ENCODE measurements at regions of chr11 and their contacts with region 1.

Region 1: DNA sequence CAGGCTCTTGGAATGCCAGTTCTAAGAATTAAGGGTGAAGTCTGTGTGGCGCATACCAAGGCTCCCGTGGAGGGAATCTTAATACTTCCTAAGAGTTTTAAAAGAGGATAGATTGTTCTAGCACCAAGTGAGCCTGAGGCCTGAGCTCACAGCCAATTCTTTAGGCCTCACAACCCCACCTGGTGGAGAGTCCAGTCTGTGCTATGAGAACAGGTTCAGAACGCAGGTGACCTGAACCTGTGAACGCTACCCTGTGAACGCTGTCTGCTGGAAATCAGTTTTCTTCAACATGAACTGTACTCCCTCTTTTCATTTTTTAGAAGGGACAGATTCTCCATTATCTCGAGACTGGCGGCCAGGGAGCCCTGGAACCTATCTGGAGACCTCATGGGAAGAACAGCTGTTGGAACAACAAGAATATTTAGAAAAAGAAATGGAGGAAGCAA is 43.2 kb upstream of the DLAT start:
- DNase-seq: peak; percentile 31
- ATAC-seq: peak; percentile 98
- H3K4me3 ChIP-seq: no peak overlapping the region
- H3K27ac ChIP-seq: no peak overlapping the region
- H3K4me1 ChIP-seq: no peaks in the 10 kb centered on the region
- H3K27me3 ChIP-seq: no peaks in the 10 kb centered on the region
- CTCF ChIP-seq: peak; percentile 66 to 82 (median 80)
- POLR2A ChIP-seq: no peak
- RAD21 ChIP-seq: peak; percentile 83

Region 2: DNA sequence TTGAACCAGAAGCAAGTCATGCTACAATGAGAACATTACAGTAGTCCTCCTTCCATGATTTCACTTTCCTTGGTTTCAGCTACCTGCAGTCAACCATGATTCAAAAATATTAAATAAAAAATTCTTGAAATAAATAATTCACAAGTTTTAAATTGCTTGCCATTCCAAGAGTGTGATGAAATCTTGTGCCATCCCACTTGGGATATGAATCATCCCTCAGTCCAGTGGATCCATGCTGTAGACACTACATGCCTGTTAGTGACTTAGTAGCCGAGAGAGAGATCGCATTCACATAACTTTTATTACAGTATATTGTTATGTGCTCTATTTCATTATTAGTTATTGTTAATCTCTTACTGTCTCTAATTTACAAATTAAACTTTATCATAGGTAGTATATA is 461.5 kb before region 1 on chr11:
- CTCF ChIA-PET with region 1: no interaction called
- POLR2A ChIA-PET with region 1: no interaction called
- RAD21 ChIA-PET with region 1: no interaction called
- intact Hi-C with region 1: no loop called
- DNase-seq: no peak
- ATAC-seq: no peak
- H3K4me3 ChIP-seq: no peak overlapping the region
- H3K27ac ChIP-seq: no peak overlapping the region
- H3K4me1 ChIP-seq: 0 out of 4 replicates have a peak, but pooled peaks cover 0 to 4% of the 10 kb centered on the region in 2 experiments
- H3K27me3 ChIP-seq: no peaks in the 10 kb centered on the region
- CTCF ChIP-seq: no peak
- POLR2A ChIP-seq: no peak
- RAD21 ChIP-seq: no peak

Region 3: DNA sequence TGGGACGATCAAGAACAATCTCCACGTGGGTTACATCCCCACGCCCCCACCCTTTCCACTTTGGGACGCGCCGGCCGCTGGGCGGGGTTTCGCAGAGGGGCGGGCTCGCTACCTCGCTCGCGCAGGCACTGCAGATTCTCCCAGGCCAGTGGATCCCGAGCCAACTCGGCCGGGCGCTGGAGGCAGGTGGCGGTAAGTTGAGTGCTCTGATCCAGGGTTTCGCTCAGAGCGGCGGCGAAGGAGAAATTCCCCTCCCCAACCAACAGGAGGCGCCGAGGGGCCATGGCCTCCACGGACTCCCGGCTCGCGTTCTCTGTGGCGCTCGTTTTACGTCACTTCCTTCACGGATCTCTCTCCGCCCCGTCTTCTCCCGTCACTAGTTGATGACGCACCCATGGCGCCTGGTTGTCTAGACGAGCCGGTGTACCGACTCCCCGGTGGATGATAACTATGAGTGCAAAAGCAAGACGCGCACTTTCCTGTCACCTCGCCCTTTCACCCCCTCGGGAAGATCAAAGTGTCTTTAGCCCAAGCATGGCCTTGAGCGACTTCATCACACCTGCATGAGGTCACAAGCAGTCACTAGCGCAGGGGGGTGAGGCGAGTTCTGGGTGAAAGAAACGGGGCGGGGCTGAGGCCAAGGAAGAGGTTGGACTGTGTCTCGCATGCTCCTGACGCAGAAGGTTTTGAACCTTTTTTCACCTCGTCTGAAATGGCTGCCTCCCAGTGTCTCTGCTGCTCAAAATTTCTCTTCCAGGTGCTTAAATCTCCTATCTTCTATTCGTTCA is 103.0 kb before region 1 on chr11 and contains the starts of genes CFAP68 and FDXACB1:
- CTCF ChIA-PET with region 1: interaction called, 4 read pairs
- POLR2A ChIA-PET with region 1: no interaction called
- RAD21 ChIA-PET with region 1: no interaction called
- intact Hi-C with region 1: loop called (anchors 1 kb)
- DNase-seq: peak; percentile 98
- ATAC-seq: peak; percentile 85
- H3K4me3 ChIP-seq: peak within 1 kb of the TSS; percentile 83 to 91
- H3K27ac ChIP-seq: peak within 1 kb of the TSS; percentile 65
- H3K4me1 ChIP-seq: peaks cover 3 to 15% of the 10 kb centered on the region in 2 experiments; a peak in 3 of 4 replicates
- H3K27me3 ChIP-seq: no peaks in the 10 kb centered on the region
- CTCF ChIP-seq: peak; percentile 78 to 91 (median 87)
- POLR2A ChIP-seq: peak; percentile 74
- RAD21 ChIP-seq: peak; percentile 91
- total RNA-seq, gene CFAP68: 49.6 TPM
- total RNA-seq, gene FDXACB1: 3.8 TPM

Region 4: DNA sequence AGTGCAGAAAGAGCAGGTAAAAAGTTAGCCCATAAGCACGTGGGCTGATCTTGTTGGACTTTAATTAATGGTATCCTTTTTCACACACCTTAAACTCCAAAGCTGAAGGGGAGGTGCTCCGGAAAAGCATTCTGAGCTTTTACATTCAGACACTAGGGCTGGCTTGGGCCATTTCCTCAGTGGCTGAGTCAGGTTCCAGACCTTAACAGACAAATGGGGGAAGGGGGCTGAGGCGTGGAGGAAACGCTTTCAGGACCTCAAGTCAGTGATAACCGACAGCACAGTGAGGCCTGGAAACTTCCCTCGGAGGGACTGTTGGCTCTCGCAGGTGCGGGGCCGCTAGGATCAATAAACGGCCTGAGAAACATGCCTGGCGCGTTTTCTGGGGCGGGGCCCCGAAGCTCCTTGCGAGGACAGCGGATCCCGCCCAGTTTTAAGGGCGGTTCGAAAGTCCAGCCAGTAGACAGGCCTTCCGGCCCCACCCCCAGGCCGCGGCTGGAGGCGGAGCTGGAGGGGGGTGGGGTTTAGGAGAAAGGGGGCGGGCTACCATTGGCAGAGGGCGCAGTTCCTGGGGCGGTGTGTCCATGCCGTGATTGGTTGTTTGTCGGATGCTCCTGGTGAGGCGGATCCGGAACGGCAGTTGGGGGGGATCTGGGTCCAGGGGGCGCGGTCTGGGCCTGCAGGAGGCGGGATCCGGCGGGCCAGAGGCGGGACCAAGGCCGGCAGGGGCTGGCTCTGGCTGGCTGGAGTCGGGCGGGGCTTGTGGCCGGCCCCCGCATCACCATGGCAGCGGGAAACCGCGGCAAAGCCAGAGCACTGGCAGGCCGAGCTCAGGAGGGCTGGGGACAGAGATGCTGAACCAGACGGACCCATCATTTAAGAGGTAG is 55.3 kb before region 1 on chr11:
- CTCF ChIA-PET with region 1: interaction called, 42 read pairs
- POLR2A ChIA-PET with region 1: no interaction called
- RAD21 ChIA-PET with region 1: interaction called, 5 to 9 read pairs
- intact Hi-C with region 1: loop called (anchors 1 kb)
- DNase-seq: peak; percentile 93
- ATAC-seq: peak; percentile 94
- H3K4me3 ChIP-seq: peak overlapping the region; percentile 49 to 64
- H3K27ac ChIP-seq: peak overlapping the region; percentile 59
- H3K4me1 ChIP-seq: peaks cover 7 to 15% of the 10 kb centered on the region in 2 experiments
- H3K27me3 ChIP-seq: no peaks in the 10 kb centered on the region
- CTCF ChIP-seq: no peak
- POLR2A ChIP-seq: no peak
- RAD21 ChIP-seq: no peak

Region 5: GRCh38 chr11:111933872-111934271 is 48.2 kb before region 1 on chr11:
- CTCF ChIA-PET with region 1: interaction called, 42 read pairs
- POLR2A ChIA-PET with region 1: no interaction called
- RAD21 ChIA-PET with region 1: interaction called, 5 to 9 read pairs
- intact Hi-C with region 1: loop called (anchors 1 kb)
- DNase-seq: no peak
- ATAC-seq: no peak
- H3K4me3 ChIP-seq: no peak overlapping the region
- H3K27ac ChIP-seq: no peak overlapping the region
- H3K4me1 ChIP-seq: peaks cover 18 to 31% of the 10 kb centered on the region in 2 experiments; a peak in 3 of 4 replicates
- H3K27me3 ChIP-seq: no peaks in the 10 kb centered on the region
- CTCF ChIP-seq: no peak
- POLR2A ChIP-seq: no peak
- RAD21 ChIP-seq: no peak